Naive thymus-derived CD4-positive, alpha-beta T cell (primary cell): ENCODE measurements at regions of chr20 and their contacts with region 1.

Region 1: GRCh38 chr20:62685781-62686555 is 22.7 kb upstream of the NTSR1 start:
- DNase-seq: peak in 5 of 9 donors; percentile 14 to 36 (median 23)
- ATAC-seq: peak; percentile 90
- H3K4me3 ChIP-seq: no peak overlapping the region
- H3K4me3 Mint-ChIP-seq: peak overlapping the region in 9 of 10 donors; percentile 20 to 76 (median 42)
- H3K27ac ChIP-seq: no peak overlapping the region
- H3K27ac Mint-ChIP-seq: peak overlapping the region in 1 of 9 donors; percentile 60
- H3K4me1 ChIP-seq: no peaks in the 10 kb centered on the region
- H3K4me1 Mint-ChIP-seq: peaks cover 6 to 17% (median 12%) of the 10 kb centered on the region in 7 donors
- H3K27me3 ChIP-seq: no peaks in the 10 kb centered on the region
- H3K27me3 Mint-ChIP-seq: peaks cover 0 to 16% (median 10%) of the 10 kb centered on the region in 5 donors

Region 2: GRCh38 chr20:62258499-62259293 is 427.3 kb before region 1 on chr20:
- CTCF ChIA-PET with region 1: no interaction called
- POLR2A ChIA-PET with region 1: no interaction called
- intact Hi-C with region 1: no loop called
- DNase-seq: no peak
- ATAC-seq: no peak
- H3K4me3 ChIP-seq: no peak overlapping the region
- H3K4me3 Mint-ChIP-seq: no peak overlapping the region
- H3K27ac ChIP-seq: no peak overlapping the region
- H3K27ac Mint-ChIP-seq: no peak overlapping the region
- H3K4me1 ChIP-seq: no peaks in the 10 kb centered on the region
- H3K4me1 Mint-ChIP-seq: peaks cover 0 to 16% (median 9%) of the 10 kb centered on the region in 7 donors
- H3K27me3 ChIP-seq: no peaks in the 10 kb centered on the region
- H3K27me3 Mint-ChIP-seq: no peaks in the 10 kb centered on the region

Region 3: GRCh38 chr20:62674370-62674769 is 11.6 kb before region 1 on chr20:
- CTCF ChIA-PET with region 1: interaction called, 11 read pairs
- POLR2A ChIA-PET with region 1: no interaction called
- intact Hi-C with region 1: no loop called
- DNase-seq: no peak
- ATAC-seq: no peak
- H3K4me3 ChIP-seq: no peak overlapping the region
- H3K4me3 Mint-ChIP-seq: no peak overlapping the region
- H3K27ac ChIP-seq: no peak overlapping the region
- H3K27ac Mint-ChIP-seq: no peak overlapping the region
- H3K4me1 ChIP-seq: no peaks in the 10 kb centered on the region
- H3K4me1 Mint-ChIP-seq: peaks cover 4 to 9% (median 5%) of the 10 kb centered on the region in 7 donors
- H3K27me3 ChIP-seq: no peaks in the 10 kb centered on the region
- H3K27me3 Mint-ChIP-seq: peaks cover 0 to 2% (median 0%) of the 10 kb centered on the region in 5 donors